ENCODE measurements at regions of chr14 and their contacts with region 1.

Region 1: GRCh38 chr14:89416002-89416995 is 734 bp downstream of the FOXN3 start:
- DNase-seq: peak; percentile 100
- H3K4me3 Mint-ChIP-seq: peak overlapping the region; percentile 98
- H3K27ac Mint-ChIP-seq: peak overlapping the region; percentile 95
- H3K4me1 Mint-ChIP-seq: peaks cover 40% of the 10 kb centered on the region
- H3K27me3 Mint-ChIP-seq: no peaks in the 10 kb centered on the region

Region 2: GRCh38 chr14:89276424-89276975 is 139.8 kb before region 1 on chr14:
- intact Hi-C with region 1: loop called (anchors 2 kb)
- DNase-seq: peak; percentile 92
- H3K4me3 Mint-ChIP-seq: peak overlapping the region; percentile 62
- H3K27ac Mint-ChIP-seq: peak overlapping the region; percentile 94
- H3K4me1 Mint-ChIP-seq: peaks cover 61% of the 10 kb centered on the region
- H3K27me3 Mint-ChIP-seq: no peaks in the 10 kb centered on the region

Region 3: DNA sequence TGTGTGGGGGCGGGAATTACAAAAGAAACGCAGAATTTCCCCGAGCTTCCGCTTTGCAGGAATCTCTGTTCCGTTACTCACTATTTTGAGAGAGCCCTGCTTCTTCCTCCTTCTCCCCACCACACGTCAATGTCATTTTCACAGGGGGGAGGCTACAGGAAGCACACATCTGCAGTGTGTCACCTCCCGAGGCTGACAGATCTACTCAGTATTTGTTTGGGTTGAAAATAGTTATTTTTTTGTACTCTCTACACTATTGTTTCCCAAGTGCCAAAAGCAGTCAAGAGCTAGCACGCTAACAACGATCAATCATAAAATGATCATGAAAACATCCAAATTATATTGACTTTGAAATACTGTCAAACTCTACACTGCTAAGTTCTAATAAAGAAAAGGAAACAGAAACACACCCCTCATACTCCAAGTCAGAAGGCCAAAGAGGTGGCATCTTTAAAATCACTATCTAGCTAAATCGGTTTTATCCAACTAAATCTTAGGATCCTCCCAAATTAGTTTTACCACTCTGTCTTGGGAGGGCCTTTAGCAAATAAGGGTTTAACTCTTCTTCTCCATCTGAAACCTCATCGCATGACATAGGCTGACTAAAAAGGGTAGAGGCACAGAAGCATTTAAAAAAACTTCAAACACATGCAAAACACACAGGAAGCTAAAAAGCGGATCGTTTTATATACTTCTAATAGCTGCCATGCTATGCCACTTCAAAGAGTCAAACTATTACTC is 51.1 kb before region 1 on chr14:
- intact Hi-C with region 1: loop called (anchors 2 kb)
- DNase-seq: peak; percentile 84
- H3K4me3 Mint-ChIP-seq: peak overlapping the region; percentile 80
- H3K27ac Mint-ChIP-seq: peak overlapping the region; percentile 92
- H3K4me1 Mint-ChIP-seq: peaks cover 38% of the 10 kb centered on the region
- H3K27me3 Mint-ChIP-seq: no peaks in the 10 kb centered on the region

Region 4: DNA sequence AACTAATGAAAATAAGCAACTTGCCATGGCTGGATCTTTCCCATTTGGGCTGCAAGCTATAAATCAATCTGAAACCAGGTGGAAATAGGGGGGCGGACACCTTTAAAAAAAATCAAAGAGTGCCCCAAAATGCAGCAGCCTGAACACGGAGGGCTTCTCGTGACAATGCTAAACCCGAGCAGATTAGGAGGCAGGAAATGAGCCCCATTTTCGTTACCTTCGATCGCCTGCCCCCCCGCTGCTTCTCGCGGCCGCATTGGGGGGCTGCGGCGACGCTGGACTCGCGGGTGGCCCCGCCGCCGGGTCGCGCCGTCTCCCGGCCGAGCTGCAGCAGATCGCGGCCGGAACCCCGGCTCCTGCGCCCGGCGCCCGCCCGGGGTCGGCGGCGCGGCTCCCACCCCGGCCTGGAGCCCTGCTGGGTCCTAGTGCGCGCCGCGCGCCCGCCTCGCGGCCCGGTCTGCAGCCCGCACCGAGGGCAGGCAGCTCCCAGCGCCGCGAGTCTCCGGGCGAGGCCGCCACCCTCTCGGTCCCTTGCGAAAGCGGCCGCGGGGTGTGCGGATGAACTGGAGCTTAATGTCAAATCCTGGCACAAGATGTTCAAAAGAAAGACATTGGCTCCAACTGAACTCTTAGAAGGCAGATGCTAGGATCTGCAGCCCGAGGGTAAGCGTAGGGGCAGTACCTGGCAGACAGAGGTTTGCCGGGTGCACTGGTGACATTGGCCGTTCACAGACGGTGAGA is 202.7 kb after region 1 on chr14:
- intact Hi-C with region 1: loop called (anchors 1 kb)
- DNase-seq: peak; percentile 92
- H3K4me3 Mint-ChIP-seq: peak overlapping the region; percentile 97
- H3K27ac Mint-ChIP-seq: peak overlapping the region; percentile 97
- H3K4me1 Mint-ChIP-seq: peaks cover 68% of the 10 kb centered on the region
- H3K27me3 Mint-ChIP-seq: no peaks in the 10 kb centered on the region

Region 5: GRCh38 chr14:89767861-89768268 is 351.6 kb after region 1 on chr14:
- intact Hi-C with region 1: loop called (anchors 5 kb)
- DNase-seq: peak; percentile 89
- H3K4me3 Mint-ChIP-seq: no peak overlapping the region
- H3K27ac Mint-ChIP-seq: peak overlapping the region; percentile 12
- H3K4me1 Mint-ChIP-seq: peaks cover 16% of the 10 kb centered on the region
- H3K27me3 Mint-ChIP-seq: peaks cover 12% of the 10 kb centered on the region

Measured in activated CD4-positive, alpha-beta T cell treated with anti-CD3 and anti-CD28 coated beads, Interleukin-2, amount 10 ng/mL, durations not matched to agents 24 days and 14 days (primary cell).